Breast epithelium (tissue), 4 donors: ENCODE measurements at regions of chr12 and their contacts with region 1.

Region 1: GRCh38 chr12:24172031-24172772 is 222.7 kb upstream of the SOX5 start:
- DNase-seq: no peak
- H3K4me3 ChIP-seq: no peak overlapping the region
- H3K27ac ChIP-seq: no peak overlapping the region
- H3K4me1 ChIP-seq: no peaks in the 10 kb centered on the region
- H3K27me3 ChIP-seq: no peaks in the 10 kb centered on the region
- CTCF ChIP-seq: no peak
- POLR2A ChIP-seq: no peak

Region 2: DNA sequence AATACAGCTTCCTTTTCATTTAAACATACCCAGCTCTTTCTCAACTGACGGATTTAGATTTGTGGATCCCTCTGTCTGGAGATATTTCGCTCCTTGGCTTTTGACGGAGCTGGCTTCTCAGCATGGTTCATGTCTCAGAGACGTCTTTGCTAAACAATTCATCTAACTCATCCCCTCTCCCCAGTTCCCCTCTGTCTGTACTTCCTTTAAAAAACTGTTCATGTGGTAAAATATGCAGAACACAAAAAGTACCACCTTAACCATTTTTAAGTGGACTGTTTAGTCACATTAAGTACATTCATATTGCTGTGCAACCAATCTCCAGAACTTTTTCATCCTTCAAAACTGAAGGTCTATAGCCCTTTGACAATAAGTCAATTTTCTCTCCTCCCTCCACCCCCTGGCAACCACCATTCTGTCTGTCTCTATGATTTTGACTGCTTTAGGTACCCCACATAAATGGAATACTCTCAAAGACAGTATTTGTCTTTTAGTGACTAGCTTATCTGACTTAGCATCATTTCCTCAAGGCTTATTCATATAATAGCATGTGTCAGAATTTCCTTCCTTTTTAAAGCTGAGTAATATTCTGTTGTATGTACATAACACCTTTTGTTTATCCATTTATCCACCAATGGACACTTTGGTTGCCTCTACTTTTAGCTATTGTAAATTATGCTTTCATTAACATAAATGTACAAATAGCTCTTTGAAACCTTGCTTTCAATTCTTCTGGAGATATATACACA is 177.0 kb after region 1 on chr12:
- intact Hi-C with region 1: loop called (anchors 10 kb)
- DNase-seq: no peak
- H3K4me3 ChIP-seq: no peak overlapping the region
- H3K27ac ChIP-seq: no peak overlapping the region
- H3K4me1 ChIP-seq: no peaks in the 10 kb centered on the region
- H3K27me3 ChIP-seq: no peaks in the 10 kb centered on the region
- CTCF ChIP-seq: no peak
- POLR2A ChIP-seq: no peak

Region 3: GRCh38 chr12:24488091-24488596 is 315.9 kb after region 1 on chr12:
- intact Hi-C with region 1: no loop called
- DNase-seq: no peak
- H3K4me3 ChIP-seq: no peak overlapping the region
- H3K27ac ChIP-seq: no peak overlapping the region
- H3K4me1 ChIP-seq: no peaks in the 10 kb centered on the region
- H3K27me3 ChIP-seq: no peaks in the 10 kb centered on the region
- CTCF ChIP-seq: no peak
- POLR2A ChIP-seq: no peak